Transverse colon (tissue), 4 donors: ENCODE measurements at regions of chr3 and their contacts with region 1.

Region 1: GRCh38 chr3:3200632-3201212 is 21.2 kb upstream of the CRBN start:
- DNase-seq: peak; percentile 15
- H3K4me3 ChIP-seq: no peak overlapping the region
- H3K27ac ChIP-seq: no peak overlapping the region
- H3K4me1 ChIP-seq: no peaks in the 10 kb centered on the region
- H3K27me3 ChIP-seq: no peaks in the 10 kb centered on the region
- CTCF ChIP-seq: peak; percentile 58 to 73 (median 65)
- EP300 ChIP-seq: no peak
- POLR2A ChIP-seq: no peak

Region 2: DNA sequence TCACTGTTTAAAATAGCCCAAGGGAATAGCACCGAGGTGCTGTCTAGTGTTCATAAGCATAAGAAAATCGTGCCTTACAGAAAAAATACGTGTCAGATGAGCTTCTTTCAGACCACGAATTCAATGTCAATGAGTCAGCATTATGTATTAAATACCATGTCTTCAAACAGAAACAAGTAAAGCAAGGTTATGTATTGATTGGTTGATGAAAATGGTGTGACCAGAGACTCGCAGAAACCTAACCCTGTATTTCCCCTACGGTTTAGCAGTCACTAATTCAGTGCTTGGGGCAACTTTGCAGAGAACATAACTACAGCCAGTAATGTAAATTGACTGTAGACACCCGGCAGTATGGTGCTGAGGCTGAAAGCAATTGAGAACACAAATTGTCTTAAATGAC is 398.3 kb before region 1 on chr3:
- in situ Hi-C with region 1: no loop called
- intact Hi-C with region 1: no loop called
- DNase-seq: no peak
- H3K4me3 ChIP-seq: no peak overlapping the region
- H3K27ac ChIP-seq: no peak overlapping the region
- H3K4me1 ChIP-seq: no peaks in the 10 kb centered on the region
- H3K27me3 ChIP-seq: no peaks in the 10 kb centered on the region
- CTCF ChIP-seq: no peak
- EP300 ChIP-seq: no peak
- POLR2A ChIP-seq: no peak

Region 3: GRCh38 chr3:3160826-3161225 is 39.9 kb before region 1 on chr3:
- in situ Hi-C with region 1: no loop called
- intact Hi-C with region 1: no loop called
- DNase-seq: no peak
- H3K4me3 ChIP-seq: no peak overlapping the region
- H3K27ac ChIP-seq: no peak overlapping the region
- H3K4me1 ChIP-seq: no peaks in the 10 kb centered on the region
- H3K27me3 ChIP-seq: no peaks in the 10 kb centered on the region
- CTCF ChIP-seq: no peak
- EP300 ChIP-seq: no peak
- POLR2A ChIP-seq: no peak

Region 4: DNA sequence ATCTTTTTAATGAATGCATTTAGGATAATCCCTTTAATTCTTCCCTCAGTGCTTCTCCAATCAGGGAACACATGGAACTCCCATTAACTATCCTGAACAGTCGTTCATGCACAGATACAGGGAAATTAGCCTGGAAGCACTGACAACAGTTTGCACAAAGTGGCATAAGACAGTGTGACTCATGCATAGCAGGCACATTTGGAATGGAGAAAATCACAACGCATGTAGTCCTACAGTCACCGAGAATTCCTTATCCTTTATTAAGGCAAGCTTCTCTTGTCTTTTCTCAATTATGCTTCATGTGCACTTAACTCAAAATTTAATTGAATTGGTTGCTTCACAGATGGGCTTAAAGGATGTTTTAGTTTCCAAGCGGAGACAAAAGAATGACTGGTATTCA is 133.8 kb after region 1 on chr3:
- in situ Hi-C with region 1: no loop called
- intact Hi-C with region 1: no loop called
- DNase-seq: no peak
- H3K4me3 ChIP-seq: no peak overlapping the region
- H3K27ac ChIP-seq: no peak overlapping the region
- H3K4me1 ChIP-seq: no peaks in the 10 kb centered on the region
- H3K27me3 ChIP-seq: no peaks in the 10 kb centered on the region
- CTCF ChIP-seq: no peak
- EP300 ChIP-seq: no peak
- POLR2A ChIP-seq: no peak

Region 5: DNA sequence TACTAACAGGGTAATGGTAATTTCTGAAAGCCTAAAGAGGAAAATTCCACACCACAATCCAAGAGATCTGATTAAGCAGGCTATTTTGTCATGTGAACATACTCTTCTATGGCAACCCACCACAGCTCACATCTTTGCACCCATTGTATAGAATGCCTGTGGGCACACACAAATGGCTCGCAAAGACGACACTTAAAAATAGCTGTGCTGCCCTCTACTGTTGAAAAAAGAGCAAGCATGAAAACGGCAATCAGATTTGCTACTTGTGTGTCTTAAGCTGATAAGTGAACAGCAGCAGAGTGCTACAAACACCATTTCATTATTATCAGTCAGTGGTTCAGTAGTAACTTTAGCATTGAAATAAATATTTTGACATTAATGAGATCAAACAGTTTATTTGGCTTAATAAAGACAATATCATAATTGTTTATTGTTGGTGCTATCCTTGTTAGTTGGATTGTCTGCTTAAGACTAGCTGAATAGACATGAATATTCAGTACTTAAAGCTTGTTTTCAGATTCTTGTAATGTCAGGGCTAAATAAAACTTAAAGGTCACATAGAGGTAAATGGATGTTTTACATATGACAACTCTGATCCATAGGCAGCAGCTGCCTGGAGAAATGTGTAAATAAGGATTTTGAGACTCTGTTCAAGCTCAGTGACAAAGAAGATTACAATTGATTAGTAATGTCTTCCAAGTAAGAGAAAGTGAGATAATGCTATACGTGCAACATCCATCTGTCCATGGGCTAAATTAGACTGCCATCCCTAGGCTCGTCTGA is 797.6 kb after region 1 on chr3:
- in situ Hi-C with region 1: loop called in 1 of 4 experiments (anchors 25 kb)
- intact Hi-C with region 1: no loop called
- DNase-seq: no peak
- H3K4me3 ChIP-seq: no peak overlapping the region
- H3K27ac ChIP-seq: no peak overlapping the region
- H3K4me1 ChIP-seq: no peaks in the 10 kb centered on the region
- H3K27me3 ChIP-seq: no peaks in the 10 kb centered on the region
- CTCF ChIP-seq: peak; percentile 21 to 55 (median 37)
- EP300 ChIP-seq: no peak
- POLR2A ChIP-seq: no peak

Region 6: GRCh38 chr3:4271834-4272233 is 1071.1 kb after region 1 on chr3:
- in situ Hi-C with region 1: loop called in 2 of 4 experiments (anchors 10 kb)
- intact Hi-C with region 1: no loop called
- DNase-seq: no peak
- H3K4me3 ChIP-seq: no peak overlapping the region
- H3K27ac ChIP-seq: no peak overlapping the region
- H3K4me1 ChIP-seq: no peaks in the 10 kb centered on the region
- H3K27me3 ChIP-seq: no peaks in the 10 kb centered on the region
- CTCF ChIP-seq: peak; percentile 23 to 45 (median 30)
- EP300 ChIP-seq: no peak
- POLR2A ChIP-seq: no peak

Region 7: GRCh38 chr3:4290272-4290893 is 1089.7 kb after region 1 on chr3:
- in situ Hi-C with region 1: loop called in 3 of 4 experiments (anchors 10 kb)
- intact Hi-C with region 1: loop called (anchors 5 kb)
- DNase-seq: peak; percentile 22
- H3K4me3 ChIP-seq: no peak overlapping the region
- H3K27ac ChIP-seq: no peak overlapping the region
- H3K4me1 ChIP-seq: no peaks in the 10 kb centered on the region
- H3K27me3 ChIP-seq: no peaks in the 10 kb centered on the region
- CTCF ChIP-seq: peak; percentile 82 to 96 (median 90)
- EP300 ChIP-seq: no peak
- POLR2A ChIP-seq: no peak